Left colon (tissue), 2 donors: ENCODE measurements at regions of chr3 and their contacts with region 1.

Region 1: DNA sequence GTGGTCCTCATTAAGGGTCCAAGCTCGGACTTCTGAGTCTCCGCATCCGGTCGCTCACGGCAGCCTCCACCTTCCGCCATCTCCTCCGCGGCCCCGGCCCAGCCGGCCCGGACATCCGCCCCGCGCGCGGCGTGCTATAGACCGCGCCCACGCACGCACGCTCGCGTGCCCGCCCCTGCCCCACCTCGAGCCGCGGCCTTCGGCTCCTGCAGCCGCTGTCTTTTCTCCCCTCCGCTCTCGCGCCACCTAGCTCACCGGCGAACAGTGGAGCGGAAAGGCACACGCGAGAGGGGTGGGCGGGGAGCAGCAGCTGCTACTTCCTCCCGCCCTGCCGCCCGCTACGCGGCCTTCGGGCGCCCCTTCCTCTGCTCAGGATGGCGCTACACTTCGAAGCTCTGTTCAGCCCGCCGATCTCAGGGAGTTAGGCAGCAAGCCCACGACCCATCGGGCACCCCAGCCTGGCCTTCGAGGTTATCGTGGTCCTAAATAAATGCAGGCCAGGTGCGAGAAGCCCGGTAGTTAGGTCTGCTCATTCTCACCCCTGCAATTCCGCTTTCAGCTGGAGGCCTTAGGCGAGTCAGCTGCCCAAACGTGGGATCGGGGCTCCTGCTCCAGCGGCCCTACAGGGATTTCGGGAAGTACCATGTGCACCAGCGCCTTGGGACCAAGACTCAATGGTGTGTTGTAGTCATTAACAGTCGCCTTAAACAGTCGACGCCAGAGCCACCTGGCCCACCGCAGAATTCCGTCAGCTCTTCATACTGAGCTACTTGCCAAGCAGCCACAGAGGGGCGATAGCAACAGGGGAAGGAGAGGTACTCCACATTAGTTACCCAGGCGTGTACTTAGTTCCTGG is at the start of gene USP4:
- DNase-seq: peak; percentile 94 to 95
- ATAC-seq: peak; percentile 96
- total RNA-seq, gene USP4: 48.5 to 55.3 TPM

Region 2: DNA sequence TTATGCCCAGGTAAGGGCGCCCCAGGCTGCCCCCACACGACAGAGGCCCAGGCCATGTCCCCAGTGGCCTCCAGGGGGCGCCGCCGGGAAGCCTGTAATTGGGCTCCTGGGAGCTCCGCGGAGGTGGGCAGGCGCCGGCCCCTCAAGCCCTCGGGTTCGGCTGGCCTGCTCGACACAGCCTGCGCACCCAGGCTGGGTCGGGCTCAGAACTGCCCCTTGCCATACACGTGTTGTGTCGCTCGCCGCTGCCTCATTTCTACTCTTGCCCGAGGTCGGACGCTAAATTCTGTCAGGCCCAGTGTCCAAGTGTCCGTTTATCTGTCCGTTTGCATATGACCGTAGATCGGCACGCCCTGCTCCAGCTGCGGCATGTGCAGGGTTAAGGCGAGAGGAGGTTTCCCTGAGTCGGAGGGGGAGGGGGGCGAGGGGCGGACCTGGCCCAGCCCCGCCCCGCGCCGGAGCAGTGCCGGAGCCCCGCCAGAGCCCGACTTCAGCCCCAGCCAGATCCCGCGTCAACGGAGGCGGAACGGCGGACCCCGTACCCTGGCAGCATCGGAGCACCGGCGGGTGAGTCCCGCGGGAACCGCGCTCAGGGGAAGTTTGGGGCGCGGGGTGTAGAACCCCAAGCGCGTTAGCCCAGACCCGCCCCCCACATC is 168.9 kb before region 1 on chr3 and contains the start of gene KLHDC8B:
- intact Hi-C with region 1: loop called in 1 of 2 experiments (anchors 2 kb)
- DNase-seq: peak; percentile 82 to 91
- ATAC-seq: peak; percentile 84
- total RNA-seq, gene KLHDC8B: 4.6 to 12.5 TPM

Region 3: GRCh38 chr3:49445381-49445780 is 105.2 kb after region 1 on chr3:
- intact Hi-C with region 1: loop called in 1 of 2 experiments (anchors 10 kb)
- DNase-seq: no peak
- ATAC-seq: no peak